Esophagus squamous epithelium (tissue), 5 donors: ENCODE measurements at regions of chr11 and their contacts with region 1.

Region 1: DNA sequence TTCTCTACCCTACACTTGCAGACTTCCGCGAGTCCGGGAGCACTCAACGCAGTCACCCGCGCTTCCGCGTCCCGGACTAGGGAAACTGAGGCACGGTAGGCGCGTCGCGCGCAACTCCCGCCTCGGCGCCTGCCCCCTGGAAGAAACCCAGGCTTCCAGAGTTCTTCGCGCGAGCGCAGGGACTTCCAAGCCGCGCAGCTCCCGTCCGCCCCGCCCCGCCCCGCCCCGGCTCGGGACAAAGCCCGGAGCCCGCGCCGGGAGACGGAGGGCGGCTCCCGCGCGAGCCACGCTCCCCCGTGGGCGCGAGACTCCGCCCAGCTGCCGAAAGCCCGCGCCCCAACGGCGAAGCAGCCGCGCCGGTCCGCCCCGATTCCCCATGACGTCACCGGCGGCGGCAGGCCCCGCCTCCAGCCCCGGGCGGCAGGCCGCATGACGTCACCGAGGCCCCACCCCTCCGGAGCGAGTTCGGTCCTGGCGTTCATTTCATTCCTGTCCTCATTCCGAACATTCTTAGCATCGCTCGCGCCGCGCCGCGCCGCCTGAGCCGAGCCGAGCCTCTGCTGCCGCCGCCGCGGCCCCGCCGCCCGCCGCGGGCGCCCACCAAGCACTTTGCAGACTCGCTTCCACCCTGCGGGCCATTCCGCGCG is at the start of gene TEAD1:
- DNase-seq: no peak
- H3K4me3 ChIP-seq: peak within 1 kb of the TSS; percentile 70 to 95 (median 88)
- H3K27ac ChIP-seq: peak within 1 kb of the TSS; percentile 95 to 99 (median 99)
- H3K4me1 ChIP-seq: peaks cover 5 to 45% (median 6%) of the 10 kb centered on the region in 3 donors
- H3K27me3 ChIP-seq: peaks cover 0 to 9% (median 0%) of the 10 kb centered on the region in 4 donors
- CTCF ChIP-seq: peak in 1 of 6 experiments; percentile 7
- POLR2A ChIP-seq: peak in 2 of 4 donors; percentile 59 to 74
- total RNA-seq, gene TEAD1: 33.3 to 75.2 (median 49.8) TPM

Region 2: DNA sequence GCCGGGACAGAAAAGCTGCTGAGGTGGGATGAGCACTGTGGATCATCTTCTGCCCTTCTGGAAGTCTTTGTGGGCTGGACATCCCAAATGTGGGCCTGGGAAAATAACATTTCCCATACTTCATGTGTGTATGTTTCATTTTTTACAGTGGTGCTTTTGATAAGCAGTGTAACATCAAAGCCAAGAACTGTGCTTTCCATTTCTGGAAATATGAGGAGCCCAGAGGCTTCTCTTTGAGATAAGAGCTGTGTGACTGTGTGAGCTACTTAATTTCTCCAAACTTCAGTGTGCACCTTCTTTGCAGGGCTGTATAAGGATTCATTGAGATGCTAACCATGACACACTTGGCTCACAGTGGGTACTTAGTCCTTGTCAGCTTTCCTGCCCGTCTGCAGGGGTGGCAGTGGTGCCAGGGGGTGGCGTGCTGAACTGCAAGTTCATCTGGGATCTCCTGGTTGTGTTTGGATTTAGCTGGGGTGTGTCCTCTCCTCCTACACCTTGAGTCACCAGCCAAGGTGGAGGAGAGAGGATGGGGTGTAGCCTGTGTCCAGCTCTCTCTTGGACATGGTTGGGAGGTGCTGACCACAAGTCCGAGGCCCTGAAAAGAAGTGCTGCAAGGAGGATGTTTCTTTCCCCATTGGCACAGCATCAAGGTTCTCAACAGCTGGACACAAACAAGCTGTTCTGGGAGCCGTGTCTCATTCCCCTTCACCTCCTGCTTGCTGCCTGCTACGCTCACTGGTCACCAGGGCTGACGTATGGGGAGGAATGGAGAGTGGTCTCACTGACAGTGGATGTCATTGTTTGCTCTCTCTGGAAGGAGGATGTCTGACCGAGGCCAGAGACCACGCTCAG is 139.6 kb after region 1 on chr11:
- intact Hi-C with region 1: loop called (anchors 5 kb)
- DNase-seq: no peak
- H3K4me3 ChIP-seq: peak overlapping the region in 1 of 4 donors; percentile 44
- H3K27ac ChIP-seq: peak overlapping the region; percentile 61 to 87 (median 84)
- H3K4me1 ChIP-seq: peaks cover 27 to 87% (median 54%) of the 10 kb centered on the region in 3 donors
- H3K27me3 ChIP-seq: no peaks in the 10 kb centered on the region
- CTCF ChIP-seq: peak in 3 of 6 experiments; percentile 29 to 52 (median 50)
- POLR2A ChIP-seq: no peak

Region 3: DNA sequence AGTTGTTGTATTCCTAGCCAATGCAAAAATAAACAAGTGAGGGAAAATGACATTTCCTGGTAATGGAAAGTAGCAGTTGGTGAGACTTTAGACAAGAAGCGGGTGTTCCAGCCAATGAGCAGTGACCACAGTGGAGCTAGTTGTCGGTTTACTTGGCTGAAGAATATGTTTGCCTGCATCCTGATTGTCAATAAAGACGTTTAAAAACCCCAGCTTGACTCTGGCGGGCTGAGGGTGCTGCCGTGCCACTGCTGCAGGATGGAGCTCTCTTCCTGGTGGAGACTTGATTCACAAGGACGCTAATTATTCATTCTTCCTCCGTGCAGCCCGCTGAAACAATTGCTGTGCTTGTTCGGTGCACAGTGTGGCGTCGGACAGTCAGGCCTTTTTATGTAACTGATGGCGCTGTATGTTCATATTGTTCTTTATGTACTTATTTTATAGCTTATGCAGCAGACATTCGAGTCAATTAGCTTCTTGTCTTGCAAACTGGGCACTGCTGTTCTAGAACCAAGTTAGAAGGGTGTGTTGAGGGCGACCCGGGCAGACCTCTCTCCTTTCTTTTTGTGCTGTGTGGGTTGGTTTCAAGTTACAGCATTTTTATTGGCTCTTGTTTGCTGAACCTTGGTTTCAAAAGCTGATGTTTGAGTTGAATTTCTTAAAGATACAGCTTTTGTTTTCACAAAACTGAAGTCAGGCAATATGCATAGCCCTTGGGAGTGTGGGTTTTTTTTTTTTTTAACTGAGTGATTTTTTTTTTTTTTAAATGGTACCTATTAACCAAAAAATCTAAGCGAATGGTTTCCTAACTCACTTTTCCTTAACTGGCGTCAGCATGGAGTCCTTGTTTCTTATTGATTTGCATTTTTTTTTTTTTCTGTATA is 154.1 kb after region 1 on chr11:
- intact Hi-C with region 1: no loop called
- DNase-seq: no peak
- H3K4me3 ChIP-seq: peak overlapping the region; percentile 18 to 64 (median 44)
- H3K27ac ChIP-seq: peak overlapping the region; percentile 57 to 79 (median 74)
- H3K4me1 ChIP-seq: peaks cover 6 to 73% (median 24%) of the 10 kb centered on the region in 3 donors
- H3K27me3 ChIP-seq: no peaks in the 10 kb centered on the region
- CTCF ChIP-seq: no peak
- POLR2A ChIP-seq: no peak

Region 4: DNA sequence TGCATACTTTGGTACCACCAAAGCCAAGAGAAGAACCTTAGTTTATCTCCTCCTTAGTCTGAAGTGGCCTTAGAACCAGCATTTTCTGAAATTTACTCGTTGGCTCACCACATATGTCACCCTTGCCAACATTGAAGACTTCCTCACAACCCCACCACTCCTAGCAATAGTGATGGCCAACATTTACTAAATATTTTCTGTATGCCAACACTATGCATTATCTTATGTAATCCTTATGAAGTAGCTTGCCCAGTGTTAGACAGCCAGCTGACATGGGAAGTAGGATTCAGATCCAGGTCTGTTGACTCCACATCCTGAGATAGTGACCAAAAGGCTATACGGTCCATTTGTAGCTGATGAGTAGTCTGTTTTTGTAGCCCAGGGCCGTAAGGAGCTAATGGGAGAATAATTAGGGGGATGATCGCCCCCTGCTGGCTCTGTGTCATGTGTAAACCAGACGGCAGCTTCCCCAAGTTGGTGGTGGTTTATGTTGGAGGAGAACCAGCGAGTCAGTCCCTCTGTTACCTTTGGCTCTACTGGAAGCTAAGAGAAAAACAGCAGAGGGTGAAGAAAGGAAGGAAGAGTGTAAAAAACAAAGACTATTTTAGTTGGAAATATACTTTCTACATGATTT is 214.6 kb after region 1 on chr11:
- intact Hi-C with region 1: loop called (anchors 10 kb)
- DNase-seq: no peak
- H3K4me3 ChIP-seq: no peak overlapping the region
- H3K27ac ChIP-seq: peak overlapping the region; percentile 46 to 80 (median 74)
- H3K4me1 ChIP-seq: peaks cover under 1 to 28% (median 4%) of the 10 kb centered on the region in 3 donors
- H3K27me3 ChIP-seq: no peaks in the 10 kb centered on the region
- CTCF ChIP-seq: peak; percentile 51 to 83 (median 72)
- POLR2A ChIP-seq: no peak